ENCODE measurements at regions of chr12 and their contacts with region 1.

Region 1: GRCh38 chr12:15818418-15818817 is 29.2 kb upstream of the EPS8 start:
- DNase-seq: no peak
- H3K4me3 Mint-ChIP-seq: no peak overlapping the region
- H3K27ac Mint-ChIP-seq: no peak overlapping the region
- H3K4me1 Mint-ChIP-seq: peaks cover 2% of the 10 kb centered on the region
- H3K27me3 Mint-ChIP-seq: no peaks in the 10 kb centered on the region
- CTCF ChIP-seq: no peak

Region 2: GRCh38 chr12:15801770-15802744 is 16.4 kb before region 1 on chr12:
- CTCF ChIA-PET with region 1: no interaction called
- POLR2A ChIA-PET with region 1: interaction called, 10 read pairs
- intact Hi-C with region 1: no loop called
- DNase-seq: peak; percentile 83
- H3K4me3 Mint-ChIP-seq: peak overlapping the region; percentile 41
- H3K27ac Mint-ChIP-seq: peak overlapping the region; percentile 63
- H3K4me1 Mint-ChIP-seq: peaks cover 26% of the 10 kb centered on the region
- H3K27me3 Mint-ChIP-seq: no peaks in the 10 kb centered on the region
- CTCF ChIP-seq: no peak

Region 3: DNA sequence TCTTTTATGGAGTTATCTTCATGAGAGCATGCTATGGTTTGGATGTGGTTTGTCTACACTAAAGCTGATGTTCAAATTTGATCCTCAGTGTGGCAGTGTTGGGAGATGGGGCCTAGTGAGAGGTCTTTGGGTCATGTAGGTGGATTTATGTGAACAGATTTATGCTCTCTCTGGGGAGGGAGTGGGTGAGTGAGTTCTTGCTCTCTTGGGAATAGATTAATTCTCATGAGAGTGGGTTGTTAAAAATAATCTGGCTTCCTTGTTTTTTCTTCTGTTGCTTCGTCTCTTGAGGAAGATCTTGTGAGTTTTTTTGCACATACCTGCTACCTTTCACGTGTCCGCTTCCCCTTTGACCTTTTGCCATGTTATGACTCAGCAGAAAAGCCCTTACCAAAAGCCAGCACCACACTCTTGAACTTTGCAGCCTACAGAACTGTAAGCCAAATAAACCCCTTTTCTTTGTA is 113.2 kb after region 1 on chr12:
- CTCF ChIA-PET with region 1: no interaction called
- POLR2A ChIA-PET with region 1: no interaction called
- intact Hi-C with region 1: no loop called
- DNase-seq: no peak
- H3K4me3 Mint-ChIP-seq: no peak overlapping the region
- H3K27ac Mint-ChIP-seq: peak overlapping the region; percentile 69
- H3K4me1 Mint-ChIP-seq: peaks cover 16% of the 10 kb centered on the region
- H3K27me3 Mint-ChIP-seq: no peaks in the 10 kb centered on the region
- CTCF ChIP-seq: no peak

Measured in MCF 10A (cell line).